ENCODE measurements at regions of chr2 and their contacts with region 1.

Region 1: GRCh38 chr2:74507145-74507925 is at the start of gene PCGF1:
- DNase-seq: peak; percentile 98 to 99
- H3K4me3 ChIP-seq: peak within 1 kb of the TSS; percentile 68
- H3K4me3 Mint-ChIP-seq: peak within 1 kb of the TSS; percentile 91
- H3K27ac Mint-ChIP-seq: peak within 1 kb of the TSS; percentile 99
- H3K4me1 ChIP-seq: peaks cover 26% of the 10 kb centered on the region
- H3K4me1 Mint-ChIP-seq: peaks cover 28% of the 10 kb centered on the region
- H3K27me3 ChIP-seq: no peaks in the 10 kb centered on the region
- H3K27me3 Mint-ChIP-seq: no peaks in the 10 kb centered on the region
- CTCF ChIP-seq: peak; percentile 70 to 89
- total RNA-seq, gene PCGF1: 27.0 and 29.7 TPM in 2 replicates

Region 2: DNA sequence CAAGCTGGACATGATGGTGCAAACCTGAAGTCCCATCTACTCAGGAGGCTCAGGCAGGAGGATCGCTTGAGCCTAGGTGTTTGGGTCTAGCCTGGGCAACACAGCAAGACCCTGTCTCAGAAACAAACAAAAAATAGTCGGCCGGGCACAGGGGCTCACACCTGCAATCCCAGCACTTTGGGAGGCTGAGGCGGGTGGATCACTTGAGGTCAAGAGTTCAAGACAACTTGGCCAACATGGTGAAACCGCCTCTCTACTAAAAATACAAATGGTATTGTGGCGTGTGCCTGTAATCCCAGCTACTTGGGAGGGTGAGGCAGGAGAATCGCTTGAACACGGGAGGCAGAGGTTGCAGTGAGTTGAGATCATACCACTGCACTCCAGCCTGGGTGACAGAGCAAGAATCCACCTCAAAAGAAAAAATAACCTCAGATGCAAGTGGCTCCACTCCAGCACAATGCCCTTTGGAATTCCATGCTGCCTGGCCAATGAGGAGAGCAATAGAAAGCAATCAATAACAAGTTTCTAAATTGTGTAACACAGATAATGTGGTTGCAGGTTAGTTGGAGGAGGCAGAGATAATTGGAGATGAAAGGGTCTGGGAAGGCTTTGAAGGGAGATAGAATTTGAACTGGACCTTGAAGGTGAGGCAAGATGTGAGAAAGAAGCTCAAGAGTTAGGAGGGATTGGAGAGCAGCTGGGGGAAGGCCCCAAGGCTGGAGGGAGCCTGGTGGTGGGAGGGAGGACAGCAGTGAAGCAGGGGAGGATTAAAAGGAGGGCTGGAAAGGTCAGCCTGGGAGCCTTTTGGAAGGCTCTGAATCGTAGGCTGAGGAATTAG is 18.5 kb before region 1 on chr2:
- CTCF ChIA-PET with region 1: interaction called, 9 read pairs
- POLR2A ChIA-PET with region 1: interaction called, 17 read pairs
- intact Hi-C with region 1: loop called (anchors 1 kb)
- DNase-seq: peak; percentile 83 to 86
- H3K4me3 ChIP-seq: no peak overlapping the region
- H3K4me3 Mint-ChIP-seq: peak overlapping the region; percentile 51
- H3K27ac Mint-ChIP-seq: peak overlapping the region; percentile 39
- H3K4me1 ChIP-seq: peaks cover 37% of the 10 kb centered on the region
- H3K4me1 Mint-ChIP-seq: peaks cover 28% of the 10 kb centered on the region
- H3K27me3 ChIP-seq: no peaks in the 10 kb centered on the region
- H3K27me3 Mint-ChIP-seq: no peaks in the 10 kb centered on the region
- CTCF ChIP-seq: peak in 1 of 2 experiments; percentile 14

Region 3: DNA sequence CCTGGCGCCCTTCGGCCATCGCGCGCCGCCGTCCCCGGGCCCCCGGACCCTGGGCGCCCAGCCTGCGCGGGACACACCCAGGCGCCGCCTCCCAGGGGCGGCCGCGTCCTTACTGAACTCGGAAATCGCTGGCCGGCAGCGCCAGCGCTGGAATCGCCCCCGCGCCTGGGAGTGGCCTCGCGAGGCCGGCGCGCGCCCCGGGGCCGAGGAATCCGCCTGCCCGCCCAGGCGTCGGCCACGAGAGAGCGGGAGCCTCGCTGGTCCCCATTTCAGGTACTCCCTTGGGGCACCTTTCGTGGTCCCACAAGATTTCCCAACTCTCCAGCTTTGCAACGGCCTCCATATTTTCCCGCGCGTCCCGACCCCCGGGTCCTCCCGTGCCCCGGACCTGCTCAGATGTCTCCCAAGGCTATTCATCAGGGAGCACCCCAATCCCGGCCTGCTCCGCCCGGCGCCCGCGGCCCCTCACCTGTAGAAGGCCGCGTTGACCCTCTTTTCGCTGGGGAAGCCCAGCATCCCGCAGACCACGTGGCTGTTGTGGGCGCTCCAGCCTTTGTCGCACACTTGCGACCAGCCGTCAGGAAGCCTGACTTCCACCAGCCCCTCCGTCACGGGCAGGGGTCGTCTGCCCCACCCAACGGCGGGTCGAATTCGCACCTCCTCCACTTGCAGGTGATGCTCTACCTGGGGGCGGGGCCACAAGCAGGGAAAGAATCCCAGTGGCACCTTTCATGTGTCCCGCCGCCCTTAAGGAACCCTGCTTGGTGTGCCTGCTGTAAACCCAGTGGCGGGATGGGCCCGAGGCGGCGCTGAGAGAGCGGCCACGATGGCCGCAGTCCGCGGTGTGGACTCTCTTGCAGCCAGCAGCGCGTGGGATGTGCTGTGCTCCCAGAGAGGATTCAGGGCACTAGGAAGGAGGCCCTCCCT is 41.8 kb after region 1 on chr2:
- CTCF ChIA-PET with region 1: no interaction called
- POLR2A ChIA-PET with region 1: no interaction called
- intact Hi-C with region 1: loop called (anchors 1 kb)
- DNase-seq: peak; percentile 88 to 90
- H3K4me3 ChIP-seq: peak overlapping the region; percentile 74
- H3K4me3 Mint-ChIP-seq: peak overlapping the region; percentile 87
- H3K27ac Mint-ChIP-seq: peak overlapping the region; percentile 94
- H3K4me1 ChIP-seq: peaks cover 22% of the 10 kb centered on the region
- H3K4me1 Mint-ChIP-seq: peaks cover 13% of the 10 kb centered on the region
- H3K27me3 ChIP-seq: no peaks in the 10 kb centered on the region
- H3K27me3 Mint-ChIP-seq: no peaks in the 10 kb centered on the region
- CTCF ChIP-seq: no peak